ENCODE measurements at regions of chr13 and their contacts with region 1.

Region 1: GRCh38 chr13:46035066-46035465 is 17.5 kb downstream of the ZC3H13 start:
- DNase-seq: no peak
- ATAC-seq: no peak
- H3K4me3 ChIP-seq: no peak overlapping the region
- H3K4me3 Mint-ChIP-seq: no peak overlapping the region
- H3K27ac ChIP-seq: no peak overlapping the region
- H3K27ac Mint-ChIP-seq: no peak overlapping the region
- H3K4me1 ChIP-seq: no peaks in the 10 kb centered on the region
- H3K4me1 Mint-ChIP-seq: peaks cover 10 to 47% (median 11%) of the 10 kb centered on the region in 7 donors
- H3K27me3 ChIP-seq: no peaks in the 10 kb centered on the region
- H3K27me3 Mint-ChIP-seq: no peaks in the 10 kb centered on the region

Region 2: DNA sequence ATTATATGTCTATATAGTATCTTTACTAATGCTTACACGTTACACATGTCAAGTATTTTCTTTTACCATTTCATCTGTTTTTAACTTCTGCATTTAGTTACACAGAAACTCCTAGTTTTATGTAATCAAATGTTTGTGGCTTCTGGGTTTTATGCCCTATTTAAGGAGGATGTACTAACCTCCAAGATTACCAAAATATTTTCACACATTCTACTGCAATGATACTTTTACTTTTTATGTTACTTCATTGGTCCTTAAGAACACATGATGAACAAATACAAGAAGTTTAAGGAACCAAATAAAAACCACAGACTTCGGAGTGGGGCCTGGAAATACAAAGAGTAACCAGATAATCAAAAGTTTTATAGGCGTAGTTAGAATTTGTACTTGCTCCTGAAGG is 19.7 kb before region 1 on chr13:
- CTCF ChIA-PET with region 1: no interaction called
- POLR2A ChIA-PET with region 1: no interaction called
- intact Hi-C with region 1: loop called in 1 of 2 experiments (anchors 2 kb)
- DNase-seq: no peak
- ATAC-seq: no peak
- H3K4me3 ChIP-seq: no peak overlapping the region
- H3K4me3 Mint-ChIP-seq: no peak overlapping the region
- H3K27ac ChIP-seq: no peak overlapping the region
- H3K27ac Mint-ChIP-seq: peak overlapping the region in 1 of 9 donors; percentile 17
- H3K4me1 ChIP-seq: no peaks in the 10 kb centered on the region
- H3K4me1 Mint-ChIP-seq: peaks cover 0 to 6% (median 4%) of the 10 kb centered on the region in 7 donors
- H3K27me3 ChIP-seq: no peaks in the 10 kb centered on the region
- H3K27me3 Mint-ChIP-seq: no peaks in the 10 kb centered on the region

Region 3: DNA sequence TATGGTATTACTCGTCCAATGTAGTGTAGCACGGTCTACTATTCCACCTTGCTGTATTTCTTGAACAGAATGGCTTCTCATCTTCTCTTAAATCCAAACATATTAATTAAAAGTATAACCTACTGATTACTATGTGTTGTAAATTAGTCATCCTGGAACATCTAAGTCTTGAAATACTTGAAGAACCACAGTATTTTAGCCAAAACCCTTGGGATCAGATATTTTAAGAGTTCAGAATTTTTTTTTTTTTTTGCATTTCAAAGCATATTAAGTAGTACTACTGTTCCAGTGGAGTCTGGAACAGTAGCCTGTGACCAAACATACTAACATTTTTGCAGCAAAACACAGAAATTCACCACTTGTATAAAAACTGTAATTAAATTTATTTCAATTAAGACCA is 12.6 kb before region 1 on chr13:
- CTCF ChIA-PET with region 1: no interaction called
- POLR2A ChIA-PET with region 1: no interaction called
- intact Hi-C with region 1: loop called in 1 of 2 experiments (anchors 1 kb)
- DNase-seq: no peak
- ATAC-seq: no peak
- H3K4me3 ChIP-seq: no peak overlapping the region
- H3K4me3 Mint-ChIP-seq: no peak overlapping the region
- H3K27ac ChIP-seq: no peak overlapping the region
- H3K27ac Mint-ChIP-seq: no peak overlapping the region
- H3K4me1 ChIP-seq: no peaks in the 10 kb centered on the region
- H3K4me1 Mint-ChIP-seq: peaks cover 2 to 24% (median 9%) of the 10 kb centered on the region in 7 donors
- H3K27me3 ChIP-seq: no peaks in the 10 kb centered on the region
- H3K27me3 Mint-ChIP-seq: no peaks in the 10 kb centered on the region

Measured in naive thymus-derived CD4-positive, alpha-beta T cell (primary cell).